Mammary epithelial cell (primary cell): ENCODE measurements at regions of chr16 and their contacts with region 1.

Region 1: DNA sequence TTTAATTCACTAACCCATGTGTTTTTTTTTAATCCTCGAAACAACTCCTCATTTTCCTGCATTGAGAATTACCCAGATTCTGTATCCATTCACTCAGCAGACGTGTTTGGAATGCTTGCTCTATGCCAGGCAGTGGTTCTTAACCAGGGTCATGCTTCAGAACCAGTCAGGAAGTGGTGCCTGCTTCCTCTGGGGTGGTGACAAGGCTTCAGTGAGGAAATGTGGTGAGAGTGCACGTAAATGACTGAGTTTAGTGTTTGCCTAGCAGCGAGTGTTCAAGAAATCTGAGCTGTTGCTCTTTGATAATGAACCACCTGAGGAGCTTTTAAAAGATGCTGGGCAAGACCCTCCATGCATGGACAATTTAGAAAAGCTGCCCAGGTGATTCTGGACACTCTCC is 9.9 kb downstream of the ZFP90 start:
- DNase-seq: no peak
- H3K4me3 ChIP-seq: no peak overlapping the region
- H3K27ac ChIP-seq: no peak overlapping the region
- H3K4me1 ChIP-seq: no peaks in the 10 kb centered on the region
- H3K27me3 ChIP-seq: no peaks in the 10 kb centered on the region
- CTCF ChIP-seq: no peak

Region 2: GRCh38 chr16:68533937-68534336 is 15.0 kb before region 1 on chr16:
- CTCF ChIA-PET with region 1: interaction called, 18 read pairs
- dilution Hi-C with region 1: no loop called
- in situ Hi-C with region 1: no loop called
- intact Hi-C with region 1: no loop called
- DNase-seq: no peak
- H3K4me3 ChIP-seq: no peak overlapping the region
- H3K27ac ChIP-seq: no peak overlapping the region
- H3K4me1 ChIP-seq: peaks cover 17% of the 10 kb centered on the region
- H3K27me3 ChIP-seq: no peaks in the 10 kb centered on the region
- CTCF ChIP-seq: no peak